ENCODE measurements at regions of chr17 and their contacts with region 1.

Region 1: DNA sequence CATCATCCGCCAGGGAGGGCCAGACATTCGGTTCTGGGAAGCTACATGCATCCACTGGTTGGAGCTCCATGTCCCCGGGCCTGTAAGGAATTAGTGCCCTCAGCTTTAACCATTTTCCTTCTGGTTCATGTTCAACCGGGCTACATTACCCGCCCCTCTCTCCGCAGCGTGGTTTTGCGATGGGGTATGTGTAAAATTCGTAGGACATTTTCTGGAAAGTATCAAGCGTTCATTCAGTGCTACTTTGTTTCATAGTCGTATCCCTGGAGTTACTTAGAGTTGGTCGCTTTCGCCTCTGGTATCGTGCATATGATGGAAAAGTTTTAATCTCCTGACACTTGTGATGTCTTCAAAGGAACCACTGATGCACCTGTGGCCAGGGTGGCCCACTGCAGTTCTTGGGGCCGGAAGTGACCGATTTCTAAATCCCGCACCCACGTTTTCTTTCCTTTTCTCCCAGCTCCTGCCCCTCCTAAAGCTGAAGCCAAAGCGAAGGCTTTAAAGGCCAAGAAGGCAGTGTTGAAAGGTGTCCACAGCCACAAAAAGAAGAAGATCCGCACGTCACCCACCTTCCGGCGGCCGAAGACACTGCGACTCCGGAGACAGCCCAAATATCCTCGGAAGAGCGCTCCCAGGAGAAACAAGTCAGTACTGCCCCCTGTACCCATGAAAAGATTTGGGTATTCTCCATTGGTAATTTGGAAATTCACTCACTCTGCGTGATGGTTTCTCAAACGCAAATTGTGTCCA is 637 bp downstream of the RPL23A start:
- DNase-seq: no peak
- H3K4me3 ChIP-seq: peak overlapping the region; percentile 97
- CTCF ChIP-seq: no peak

Region 2: GRCh38 chr17:28661635-28662537 is 58.5 kb before region 1 on chr17 and contains the starts of genes SDF2 and SUPT6H:
- CTCF ChIA-PET with region 1: no interaction called
- POLR2A ChIA-PET with region 1: interaction called, 11 read pairs
- DNase-seq: no peak
- H3K4me3 ChIP-seq: peak within 1 kb of the TSS; percentile 99
- CTCF ChIP-seq: no peak